ENCODE measurements at regions of chr14 and their contacts with region 1.

Region 1: DNA sequence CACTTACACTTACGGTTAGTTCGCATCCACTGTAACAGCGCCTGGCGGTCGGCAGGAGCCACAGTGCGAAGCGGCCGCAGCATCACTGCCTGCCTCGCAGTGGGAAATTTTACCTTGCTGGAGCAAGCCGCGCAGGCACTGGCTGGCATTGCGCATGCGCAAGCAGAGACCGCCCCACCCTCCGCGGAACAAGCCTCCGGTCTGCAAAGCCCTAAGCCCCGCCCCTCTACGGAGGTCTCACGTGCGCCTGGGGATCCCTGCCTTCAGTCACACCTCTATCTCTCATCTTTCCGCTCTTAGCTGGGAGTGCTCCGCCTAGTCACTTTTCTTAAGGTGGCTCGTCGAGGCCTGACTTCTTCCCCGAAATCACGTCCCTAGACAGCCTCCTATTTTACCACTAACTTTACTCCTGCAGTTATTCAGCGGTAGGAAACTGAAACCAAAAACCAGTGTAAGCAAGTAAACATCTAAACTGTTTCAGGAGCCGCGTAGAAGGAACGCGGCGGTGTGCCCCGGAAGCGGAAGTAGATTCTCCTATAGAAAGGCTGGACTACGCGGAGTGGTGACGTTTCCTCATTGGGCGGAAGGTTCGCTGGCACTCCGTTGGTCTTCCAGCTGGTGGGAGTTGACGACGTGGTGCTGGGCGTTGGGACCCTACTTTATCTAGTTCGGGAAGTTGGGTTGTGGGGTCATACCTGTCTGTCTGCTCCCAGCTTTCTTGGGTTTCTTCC is at the start of gene SRP54:
- DNase-seq: peak; percentile 100
- ATAC-seq: peak; percentile 89
- H3K4me3 ChIP-seq: peak within 1 kb of the TSS; percentile 78 to 84 (median 80)
- H3K27ac ChIP-seq: peak within 1 kb of the TSS; percentile 93
- H3K4me1 ChIP-seq: peaks cover 59% of the 10 kb centered on the region
- H3K27me3 ChIP-seq: peaks cover 0 to 3% of the 10 kb centered on the region in 2 experiments; a peak in 1 of 5 replicates
- CTCF ChIP-seq: peak; percentile 67
- EP300 ChIP-seq: no peak; a peak in 2 of 4 replicates
- POLR2A ChIP-seq: peak; percentile 99
- RAD21 ChIP-seq: peak; percentile 59
- total RNA-seq, gene SRP54: 207 and 297 TPM in 2 replicates

Region 2: DNA sequence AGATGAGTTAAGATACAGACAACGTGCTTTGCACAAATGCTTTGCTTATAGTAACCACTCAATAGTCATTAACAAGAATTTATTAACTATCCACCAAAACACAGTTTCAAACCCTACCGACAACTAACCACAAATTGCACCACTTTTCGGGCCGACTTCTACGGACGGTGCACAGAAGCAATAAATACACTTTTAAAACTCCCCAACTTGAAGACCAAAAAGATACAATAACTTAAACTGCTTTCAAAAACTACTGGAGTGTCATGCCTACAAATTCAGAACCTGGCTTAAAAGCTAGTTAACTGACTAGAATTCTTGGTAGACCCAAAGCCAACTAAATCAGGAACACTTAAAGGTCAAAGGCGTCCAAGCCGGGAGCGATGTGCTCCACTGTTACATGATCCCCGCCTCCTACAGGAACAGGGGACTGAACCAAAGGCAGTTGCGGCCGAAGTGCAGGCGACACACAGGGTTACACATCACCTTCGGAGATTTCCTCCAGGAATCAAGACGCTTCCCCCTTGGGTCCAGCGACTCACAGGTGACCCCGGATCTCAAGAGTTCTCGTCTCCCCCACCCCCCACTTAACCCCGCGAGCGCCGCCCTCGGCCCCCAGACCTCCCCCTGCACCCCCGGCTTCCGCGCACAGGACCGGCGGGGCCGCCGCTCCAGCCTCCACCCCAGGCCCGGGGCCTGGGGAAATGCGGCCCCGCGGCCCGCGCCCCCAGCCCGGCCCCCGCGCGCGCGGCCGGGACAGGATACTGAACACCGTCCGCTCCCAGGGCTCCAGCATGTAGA is 521.0 kb before region 1 on chr14:
- CTCF ChIA-PET with region 1: no interaction called
- POLR2A ChIA-PET with region 1: interaction called, 3 read pairs
- in situ Hi-C with region 1: no loop called
- intact Hi-C with region 1: loop called (anchors 10 kb)
- DNase-seq: peak; percentile 89
- ATAC-seq: peak; percentile 75
- H3K4me3 ChIP-seq: peak overlapping the region; percentile 68 to 94 (median 73)
- H3K27ac ChIP-seq: peak overlapping the region; percentile 77
- H3K4me1 ChIP-seq: peaks cover 72% of the 10 kb centered on the region
- H3K27me3 ChIP-seq: no peaks in the 10 kb centered on the region; a peak in 1 of 5 replicates
- CTCF ChIP-seq: 0 out of 2 replicates have a peak, but pooled peaks have one; percentile 23
- EP300 ChIP-seq: no peak; a peak in 2 of 4 replicates
- POLR2A ChIP-seq: peak in 1 of 2 experiments; percentile 86; a peak in 2 of 4 replicates
- RAD21 ChIP-seq: no peak; the same call in 1 of the 2 replicates

Region 3: GRCh38 chr14:34671716-34672115 is 310.9 kb before region 1 on chr14:
- CTCF ChIA-PET with region 1: no interaction called
- POLR2A ChIA-PET with region 1: no interaction called
- in situ Hi-C with region 1: no loop called
- intact Hi-C with region 1: loop called (anchors 5 kb)
- DNase-seq: no peak
- ATAC-seq: no peak
- H3K4me3 ChIP-seq: no peak overlapping the region
- H3K27ac ChIP-seq: no peak overlapping the region
- H3K4me1 ChIP-seq: peaks cover 14% of the 10 kb centered on the region
- H3K27me3 ChIP-seq: peaks cover 0 to 4% of the 10 kb centered on the region in 2 experiments; a peak in 1 of 5 replicates
- CTCF ChIP-seq: no peak
- EP300 ChIP-seq: no peak
- POLR2A ChIP-seq: no peak
- RAD21 ChIP-seq: no peak

Region 4: GRCh38 chr14:34875031-34875922 is 107.3 kb before region 1 on chr14 and contains the start of gene BAZ1A:
- CTCF ChIA-PET with region 1: no interaction called
- POLR2A ChIA-PET with region 1: interaction called, 73 read pairs
- in situ Hi-C with region 1: no loop called
- intact Hi-C with region 1: loop called (anchors 1 kb)
- DNase-seq: peak; percentile 93
- ATAC-seq: peak; percentile 46
- H3K4me3 ChIP-seq: peak within 1 kb of the TSS; percentile 82 to 89 (median 87)
- H3K27ac ChIP-seq: peak within 1 kb of the TSS; percentile 85
- H3K4me1 ChIP-seq: peaks cover 34% of the 10 kb centered on the region
- H3K27me3 ChIP-seq: no peaks in the 10 kb centered on the region; a peak in 1 of 5 replicates
- CTCF ChIP-seq: peak; percentile 37; the same call in 1 of the 2 replicates
- EP300 ChIP-seq: no peak
- POLR2A ChIP-seq: peak in 1 of 2 experiments; percentile 93; a peak in 2 of 4 replicates
- RAD21 ChIP-seq: no peak; the same call in none of the 2 replicates
- total RNA-seq, gene BAZ1A: 56.8 and 68.3 TPM in 2 replicates

Region 5: GRCh38 chr14:34997762-34998161 is 15.2 kb after region 1 on chr14:
- CTCF ChIA-PET with region 1: no interaction called
- POLR2A ChIA-PET with region 1: interaction called, 45 read pairs
- in situ Hi-C with region 1: no loop called
- intact Hi-C with region 1: no loop called
- DNase-seq: no peak
- ATAC-seq: no peak
- H3K4me3 ChIP-seq: no peak overlapping the region
- H3K27ac ChIP-seq: no peak overlapping the region
- H3K4me1 ChIP-seq: no peaks in the 10 kb centered on the region
- H3K27me3 ChIP-seq: no peaks in the 10 kb centered on the region
- CTCF ChIP-seq: no peak
- EP300 ChIP-seq: no peak
- POLR2A ChIP-seq: no peak
- RAD21 ChIP-seq: no peak

Region 6: GRCh38 chr14:35046048-35046741 is 63.6 kb after region 1 on chr14 and contains the start of gene FAM177A1:
- CTCF ChIA-PET with region 1: no interaction called
- POLR2A ChIA-PET with region 1: interaction called, 101 read pairs
- in situ Hi-C with region 1: loop called (anchors 5 kb)
- intact Hi-C with region 1: loop called (anchors 1 kb)
- DNase-seq: peak; percentile 99
- ATAC-seq: peak; percentile 97
- H3K4me3 ChIP-seq: peak within 1 kb of the TSS; percentile 81 to 96 (median 90)
- H3K27ac ChIP-seq: peak within 1 kb of the TSS; percentile 82
- H3K4me1 ChIP-seq: peaks cover 52% of the 10 kb centered on the region
- H3K27me3 ChIP-seq: no peaks in the 10 kb centered on the region; a peak in 1 of 5 replicates
- CTCF ChIP-seq: peak; percentile 48
- EP300 ChIP-seq: peak in 1 of 2 experiments; percentile 44; a peak in 2 of 4 replicates
- POLR2A ChIP-seq: peak; percentile 93 to 96
- RAD21 ChIP-seq: peak; percentile 72
- total RNA-seq, gene FAM177A1: 116 and 119 TPM in 2 replicates

Region 7: GRCh38 chr14:35121887-35122695 is 139.5 kb after region 1 on chr14 and contains the starts of genes PPP2R3C and PRORP:
- CTCF ChIA-PET with region 1: no interaction called
- POLR2A ChIA-PET with region 1: interaction called, 55 read pairs
- in situ Hi-C with region 1: no loop called
- intact Hi-C with region 1: loop called (anchors 2 kb)
- DNase-seq: peak; percentile 98
- ATAC-seq: peak; percentile 94
- H3K4me3 ChIP-seq: peak within 1 kb of the TSS; percentile 82 to 97 (median 86)
- H3K27ac ChIP-seq: peak within 1 kb of the TSS; percentile 91
- H3K4me1 ChIP-seq: peaks cover 67% of the 10 kb centered on the region
- H3K27me3 ChIP-seq: peaks cover 0 to 5% of the 10 kb centered on the region in 2 experiments; a peak in 2 of 5 replicates
- CTCF ChIP-seq: peak; percentile 37
- EP300 ChIP-seq: peak; percentile 47 to 82
- POLR2A ChIP-seq: peak; percentile 90 to 96
- RAD21 ChIP-seq: no peak
- total RNA-seq, gene PPP2R3C: 102 and 140 TPM in 2 replicates
- total RNA-seq, gene PRORP: 88.7 and 131 TPM in 2 replicates

Measured in HepG2 (cell line).